Activated CD4-positive, alpha-beta T cell treated with anti-CD3 and anti-CD28 coated beads for 36 hours (primary cell): ENCODE measurements at regions of chr9 and their contacts with region 1.

Region 1: GRCh38 chr9:4366591-4367330 is 66.9 kb upstream of the GLIS3 start:
- DNase-seq: peak; percentile 53
- ATAC-seq: no peak
- H3K4me3 Mint-ChIP-seq: no peak overlapping the region
- H3K27ac Mint-ChIP-seq: no peak overlapping the region
- H3K4me1 Mint-ChIP-seq: peaks cover 12% of the 10 kb centered on the region
- H3K27me3 Mint-ChIP-seq: peaks cover 5% of the 10 kb centered on the region

Region 2: DNA sequence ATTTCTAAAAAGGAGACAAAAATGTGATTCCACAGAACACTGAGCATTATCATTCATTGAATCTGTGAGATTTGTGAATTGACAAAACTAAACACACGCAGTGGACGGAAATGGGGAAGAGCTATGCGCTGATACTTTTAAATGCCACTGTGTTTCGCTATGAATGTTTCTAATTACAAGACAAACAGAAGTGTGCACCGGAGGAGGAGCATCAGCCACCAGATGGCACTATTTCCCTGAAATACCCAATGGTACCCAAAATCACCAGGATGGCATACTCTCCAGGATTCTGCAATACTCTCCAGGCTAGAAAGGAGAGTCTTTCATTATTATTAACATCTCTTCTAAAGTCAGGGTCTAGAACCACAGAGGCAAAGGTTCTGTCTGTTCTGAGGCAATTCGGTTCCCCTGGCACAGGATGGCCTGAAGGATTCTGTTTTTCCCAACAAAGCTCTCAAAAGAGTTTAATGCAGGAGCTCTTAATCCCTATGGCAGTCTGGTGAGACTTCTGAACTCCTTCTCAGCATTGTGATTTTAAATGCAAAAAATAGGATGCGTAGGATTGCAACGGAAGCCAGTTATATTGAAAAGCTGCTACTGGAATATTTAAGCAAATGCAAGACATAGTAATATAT is 1509.1 kb before region 1 on chr9:
- CTCF ChIA-PET with region 1: interaction called, 3 read pairs
- POLR2A ChIA-PET with region 1: no interaction called
- intact Hi-C with region 1: loop called (anchors 5 kb)
- DNase-seq: peak; percentile 81
- ATAC-seq: peak; percentile 93
- H3K4me3 Mint-ChIP-seq: no peak overlapping the region
- H3K27ac Mint-ChIP-seq: no peak overlapping the region
- H3K4me1 Mint-ChIP-seq: peaks cover 2% of the 10 kb centered on the region
- H3K27me3 Mint-ChIP-seq: peaks cover 25% of the 10 kb centered on the region

Region 3: DNA sequence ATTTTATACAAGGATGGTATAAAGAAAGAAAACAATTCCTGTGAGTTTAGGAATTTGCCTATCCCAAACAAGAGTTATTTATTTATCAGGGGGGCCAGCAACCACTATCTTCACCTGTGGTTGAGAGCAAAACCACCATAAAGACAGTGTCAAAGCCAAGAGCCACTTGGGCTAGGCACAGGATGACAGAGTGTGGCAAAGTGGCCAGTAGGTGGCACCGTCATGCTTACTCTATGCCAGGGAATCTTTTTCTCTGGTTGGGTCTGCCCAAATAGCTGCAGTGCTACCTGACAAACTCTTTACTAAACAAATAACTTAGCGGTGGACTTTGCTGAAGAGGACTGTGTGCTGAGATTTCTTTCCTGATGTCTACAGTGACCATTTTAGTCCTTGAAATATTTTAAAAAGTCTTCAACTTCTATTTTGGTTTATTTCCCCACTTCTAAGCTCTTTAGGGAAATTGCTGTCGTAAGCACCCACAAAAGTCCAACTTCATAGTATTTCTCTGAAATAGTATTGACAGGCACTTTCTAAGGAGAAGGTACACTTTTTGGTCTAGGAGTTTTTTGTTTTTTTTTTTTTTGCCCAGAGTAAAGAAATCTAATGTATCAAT is 1126.0 kb before region 1 on chr9:
- CTCF ChIA-PET with region 1: no interaction called
- POLR2A ChIA-PET with region 1: no interaction called
- intact Hi-C with region 1: loop called in 1 of 2 experiments (anchors 10 kb)
- DNase-seq: peak; percentile 84
- ATAC-seq: peak; percentile 93
- H3K4me3 Mint-ChIP-seq: no peak overlapping the region
- H3K27ac Mint-ChIP-seq: no peak overlapping the region
- H3K4me1 Mint-ChIP-seq: peaks cover 8% of the 10 kb centered on the region
- H3K27me3 Mint-ChIP-seq: no peaks in the 10 kb centered on the region

Region 4: DNA sequence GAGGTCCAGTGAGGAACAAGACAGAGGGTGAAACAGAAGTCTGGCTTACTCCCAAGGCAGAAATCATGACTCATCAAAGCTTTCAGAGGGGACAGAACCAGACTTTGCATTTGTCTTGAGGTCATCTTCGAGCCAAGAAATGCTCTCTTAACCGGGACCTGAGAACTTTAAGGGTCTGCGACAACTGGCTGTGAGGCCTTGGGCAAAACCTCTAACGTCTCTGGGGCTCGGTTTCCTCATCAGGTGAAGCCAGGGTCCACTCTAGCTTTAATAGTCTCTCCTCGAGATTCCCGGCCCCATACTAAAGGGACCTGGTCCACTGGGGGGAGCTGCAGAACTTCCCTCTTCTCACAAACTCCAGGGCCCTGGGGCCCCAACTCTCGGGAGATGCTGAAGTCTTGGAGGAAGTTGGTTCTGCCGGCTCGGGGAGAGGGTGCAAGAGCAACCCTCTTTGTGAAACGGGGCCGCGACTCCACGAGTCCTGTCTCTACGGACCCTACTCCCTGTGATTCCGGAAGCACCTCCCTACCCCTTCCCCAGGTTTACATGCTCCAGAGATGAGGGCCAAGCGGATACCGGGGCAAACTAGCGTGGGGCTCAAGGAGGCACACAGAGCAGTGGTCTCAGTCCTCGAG is 69.5 kb before region 1 on chr9:
- CTCF ChIA-PET with region 1: interaction called, 4 read pairs
- POLR2A ChIA-PET with region 1: interaction called, 3 read pairs
- intact Hi-C with region 1: loop called in 1 of 2 experiments (anchors 5 kb)
- DNase-seq: peak; percentile 65
- ATAC-seq: peak; percentile 37
- H3K4me3 Mint-ChIP-seq: peak overlapping the region; percentile 86
- H3K27ac Mint-ChIP-seq: peak overlapping the region; percentile 86
- H3K4me1 Mint-ChIP-seq: peaks cover 45% of the 10 kb centered on the region
- H3K27me3 Mint-ChIP-seq: peaks cover 32% of the 10 kb centered on the region

Region 5: DNA sequence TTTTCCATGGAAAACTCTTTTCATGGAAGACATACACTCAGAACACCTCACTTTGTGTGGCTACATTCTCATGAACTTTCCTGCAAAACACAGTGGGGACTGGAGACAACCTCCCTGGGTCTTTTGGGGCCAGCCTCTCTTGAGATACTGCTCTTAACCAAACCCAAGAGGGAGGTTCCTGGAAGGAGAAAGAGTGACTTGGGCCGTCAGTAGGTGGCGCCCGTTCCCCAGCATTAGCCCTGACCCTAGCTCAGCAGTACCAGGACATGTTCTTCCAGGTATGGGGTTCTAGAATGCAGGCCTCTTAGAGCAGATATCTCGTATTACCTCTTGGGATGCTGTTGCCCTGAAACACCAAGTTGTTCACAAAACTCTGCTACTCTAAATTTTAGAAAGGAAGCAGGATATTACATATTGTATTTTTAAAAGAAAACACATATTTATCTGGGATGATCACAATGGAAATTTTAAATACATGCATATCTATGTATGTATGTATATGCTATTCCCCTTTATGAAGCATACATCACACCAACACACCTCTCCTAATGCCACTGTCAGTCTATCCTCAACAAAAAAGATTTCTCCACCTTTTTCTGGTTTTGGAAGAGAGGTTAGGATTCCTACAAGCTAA is 51.1 kb before region 1 on chr9:
- CTCF ChIA-PET with region 1: interaction called, 96 read pairs
- POLR2A ChIA-PET with region 1: interaction called, 3 read pairs
- intact Hi-C with region 1: loop called (anchors 1 kb)
- DNase-seq: peak; percentile 88
- ATAC-seq: peak; percentile 97
- H3K4me3 Mint-ChIP-seq: no peak overlapping the region
- H3K27ac Mint-ChIP-seq: no peak overlapping the region
- H3K4me1 Mint-ChIP-seq: no peaks in the 10 kb centered on the region
- H3K27me3 Mint-ChIP-seq: peaks cover 4% of the 10 kb centered on the region

Region 6: GRCh38 chr9:4339357-4339756 is 27.4 kb before region 1 on chr9:
- CTCF ChIA-PET with region 1: interaction called, 50 read pairs
- POLR2A ChIA-PET with region 1: no interaction called
- intact Hi-C with region 1: loop called (anchors 1 to 2 kb)
- DNase-seq: peak; percentile 91
- ATAC-seq: peak; percentile 94
- H3K4me3 Mint-ChIP-seq: peak overlapping the region; percentile 30
- H3K27ac Mint-ChIP-seq: peak overlapping the region; percentile 65
- H3K4me1 Mint-ChIP-seq: peaks cover 15% of the 10 kb centered on the region
- H3K27me3 Mint-ChIP-seq: no peaks in the 10 kb centered on the region

Region 7: GRCh38 chr9:4344946-4345345 is 21.8 kb before region 1 on chr9:
- CTCF ChIA-PET with region 1: interaction called, 50 read pairs
- POLR2A ChIA-PET with region 1: no interaction called
- intact Hi-C with region 1: loop called in 1 of 2 experiments (anchors 2 kb)
- DNase-seq: peak; percentile 78
- ATAC-seq: peak; percentile 98
- H3K4me3 Mint-ChIP-seq: no peak overlapping the region
- H3K27ac Mint-ChIP-seq: peak overlapping the region; percentile 28
- H3K4me1 Mint-ChIP-seq: peaks cover 21% of the 10 kb centered on the region
- H3K27me3 Mint-ChIP-seq: no peaks in the 10 kb centered on the region